ENCODE measurements at regions of chr12 and their contacts with region 1.

Region 1: DNA sequence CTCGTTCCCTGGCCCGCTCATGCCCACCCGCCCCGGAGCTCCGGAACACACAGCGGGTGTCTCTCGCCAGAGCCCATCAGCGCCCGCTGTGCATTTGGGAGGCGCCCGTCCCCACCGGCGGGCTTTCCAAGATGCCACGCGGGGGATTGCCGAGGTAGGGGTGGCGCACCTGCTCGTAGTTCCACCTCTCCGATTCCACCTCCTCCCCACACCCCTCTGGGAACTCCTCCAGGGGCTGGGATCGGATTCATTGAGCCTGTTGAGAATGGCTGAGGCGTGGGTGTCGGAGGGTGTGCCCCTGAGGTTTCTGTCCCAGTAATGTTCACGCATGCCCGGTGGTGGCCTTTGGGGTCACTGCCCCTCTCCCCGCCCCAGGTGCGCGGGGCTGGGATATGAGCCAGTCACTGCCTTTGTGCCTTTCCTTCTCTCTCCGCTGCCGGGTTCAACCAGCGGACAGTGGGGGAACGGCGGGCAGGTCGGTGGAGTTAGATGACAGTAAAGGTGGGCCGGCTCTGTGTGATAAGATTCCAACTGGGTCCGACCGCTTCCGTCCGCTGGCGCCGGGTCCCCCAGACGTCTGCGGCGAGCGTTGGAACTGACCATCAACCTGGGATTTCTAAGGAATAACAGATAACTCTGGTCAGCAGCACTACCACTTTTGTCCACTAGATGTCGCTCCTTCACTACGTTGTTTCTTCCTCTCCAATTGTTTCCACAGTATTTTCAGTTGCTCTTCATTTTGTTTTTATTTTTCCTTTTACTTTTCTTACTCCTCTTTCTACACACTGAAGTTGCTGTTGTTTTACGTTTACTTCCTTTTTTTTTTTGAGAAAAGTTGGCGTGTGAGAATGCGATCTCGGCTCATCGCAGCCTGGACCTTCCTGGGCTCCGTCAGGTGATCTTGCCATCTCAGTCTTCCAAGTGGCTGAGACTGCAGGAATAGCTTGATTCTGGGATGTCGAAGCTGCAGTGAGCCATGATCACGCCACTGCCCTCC is 178.1 kb upstream of the ALG10B start:
- DNase-seq: peak in 6 of 10 donors; percentile 54 to 90 (median 70)
- H3K4me3 ChIP-seq: peak overlapping the region; percentile 16 to 77 (median 55)
- H3K27ac ChIP-seq: peak overlapping the region in 6 of 59 donors; percentile 1 to 43 (median 26)
- H3K27me3 ChIP-seq: peaks cover 0 to 18% (median 0%) of the 10 kb centered on the region in 45 donors
- CTCF ChIP-seq: peak; percentile 92 to 100 (median 98)

Region 2: GRCh38 chr12:38316391-38317129 is 178.0 kb after region 1 on chr12 and contains the start of gene ALG10B:
- intact Hi-C with region 1: loop called (anchors 2 kb)
- DNase-seq: peak; percentile 86 to 96 (median 94)
- H3K4me3 ChIP-seq: peak within 1 kb of the TSS; percentile 49 to 93 (median 78)
- H3K27ac ChIP-seq: peak within 1 kb of the TSS in 57 of 59 donors; percentile 40 to 95 (median 84)
- H3K27me3 ChIP-seq: no peaks in the 10 kb centered on the region
- CTCF ChIP-seq: peak; percentile 70 to 96 (median 86)
- total RNA-seq, gene ALG10B: 4.5 to 15.5 (median 10.1) TPM

Region 3: GRCh38 chr12:39103552-39104165 is 965.1 kb after region 1 on chr12:
- intact Hi-C with region 1: loop called in 1 of 2 experiments (anchors 10 kb)
- DNase-seq: no peak
- H3K4me3 ChIP-seq: peak overlapping the region in 37 of 59 donors; percentile 2 to 52 (median 20)
- H3K27ac ChIP-seq: no peak overlapping the region
- H3K27me3 ChIP-seq: no peaks in the 10 kb centered on the region
- CTCF ChIP-seq: peak; percentile 69 to 90 (median 82)

Region 4: GRCh38 chr12:39272871-39273770 is 1134.6 kb after region 1 on chr12:
- intact Hi-C with region 1: loop called (anchors 5 to 10 kb)
- DNase-seq: peak in 2 of 10 donors; percentile 4 to 21
- H3K4me3 ChIP-seq: no peak overlapping the region
- H3K27ac ChIP-seq: no peak overlapping the region
- H3K27me3 ChIP-seq: peaks cover 0 to 5% (median 0%) of the 10 kb centered on the region in 45 donors
- CTCF ChIP-seq: peak; percentile 58 to 88 (median 74)